ENCODE measurements at regions of chr2 and their contacts with region 1.

Region 1: DNA sequence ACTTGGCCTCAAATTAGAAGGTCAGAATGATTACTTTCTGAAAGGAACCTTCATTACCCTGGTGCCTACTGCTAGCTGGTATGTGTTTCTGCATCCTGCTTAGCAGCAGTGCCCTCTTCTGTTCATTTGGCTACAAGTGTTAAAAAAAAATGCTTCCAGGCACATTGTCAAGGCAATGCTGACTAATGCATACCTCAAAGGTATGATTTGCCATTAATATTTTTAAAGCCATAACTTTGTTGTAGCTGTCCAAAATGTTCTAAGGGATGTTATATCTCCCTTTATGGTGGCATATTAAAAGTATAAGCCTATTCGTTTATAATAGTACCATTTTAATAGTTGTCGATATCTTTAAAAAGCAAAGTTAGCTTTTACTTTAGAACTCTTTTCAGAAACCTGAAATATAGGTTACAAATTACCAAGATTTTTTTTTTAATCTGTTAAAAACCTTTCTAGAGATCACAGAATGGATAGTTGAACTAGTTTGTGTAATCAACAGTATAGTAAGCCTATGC is 52.0 kb upstream of the FAM171B start:
- DNase-seq: peak; percentile 21
- ATAC-seq: peak; percentile 91
- H3K4me3 ChIP-seq: no peak overlapping the region
- H3K27ac ChIP-seq: no peak overlapping the region
- H3K4me1 ChIP-seq: peaks cover 30% of the 10 kb centered on the region
- H3K27me3 ChIP-seq: no peaks in the 10 kb centered on the region
- CTCF ChIP-seq: peak; percentile 62 to 84 (median 76)
- EP300 ChIP-seq: no peak
- POLR2A ChIP-seq: no peak
- RAD21 ChIP-seq: peak; percentile 95

Region 2: GRCh38 chr2:186496401-186496800 is 145.5 kb before region 1 on chr2:
- CTCF ChIA-PET with region 1: interaction called, 244 read pairs
- POLR2A ChIA-PET with region 1: no interaction called
- RAD21 ChIA-PET with region 1: interaction called, 94 read pairs
- SMC1A ChIA-PET with region 1: interaction called, 14 read pairs
- in situ Hi-C with region 1: no loop called
- intact Hi-C with region 1: no loop called
- DNase-seq: no peak
- ATAC-seq: no peak
- H3K4me3 ChIP-seq: no peak overlapping the region
- H3K27ac ChIP-seq: no peak overlapping the region
- H3K4me1 ChIP-seq: no peaks in the 10 kb centered on the region
- H3K27me3 ChIP-seq: no peaks in the 10 kb centered on the region
- CTCF ChIP-seq: no peak
- EP300 ChIP-seq: no peak
- POLR2A ChIP-seq: no peak
- RAD21 ChIP-seq: no peak

Region 3: DNA sequence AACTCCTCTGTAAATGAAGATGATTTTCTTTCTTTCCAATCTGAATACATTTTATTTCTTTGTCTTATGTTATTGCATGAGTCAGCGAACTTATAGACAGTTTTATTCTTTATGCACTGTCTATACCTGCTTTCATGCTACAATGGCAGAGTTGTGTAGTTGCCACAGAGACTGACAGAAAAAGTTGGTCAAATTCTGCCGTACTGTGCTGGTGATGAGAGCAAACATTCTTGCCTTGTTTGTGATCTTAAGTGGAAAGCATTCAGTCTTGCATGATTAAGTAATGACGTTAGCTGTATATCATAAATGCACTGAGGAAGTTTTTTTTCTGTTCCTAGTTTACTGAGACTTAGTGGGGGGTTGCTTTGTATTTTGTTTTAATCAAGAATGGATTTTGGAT is 122.9 kb before region 1 on chr2:
- CTCF ChIA-PET with region 1: interaction called, 35 read pairs
- POLR2A ChIA-PET with region 1: no interaction called
- RAD21 ChIA-PET with region 1: interaction called, 6 read pairs
- SMC1A ChIA-PET with region 1: interaction called, 28 read pairs
- in situ Hi-C with region 1: no loop called
- intact Hi-C with region 1: no loop called
- DNase-seq: no peak
- ATAC-seq: no peak
- H3K4me3 ChIP-seq: no peak overlapping the region
- H3K27ac ChIP-seq: no peak overlapping the region
- H3K4me1 ChIP-seq: no peaks in the 10 kb centered on the region
- H3K27me3 ChIP-seq: no peaks in the 10 kb centered on the region
- CTCF ChIP-seq: no peak
- EP300 ChIP-seq: no peak
- POLR2A ChIP-seq: no peak
- RAD21 ChIP-seq: no peak

Region 4: DNA sequence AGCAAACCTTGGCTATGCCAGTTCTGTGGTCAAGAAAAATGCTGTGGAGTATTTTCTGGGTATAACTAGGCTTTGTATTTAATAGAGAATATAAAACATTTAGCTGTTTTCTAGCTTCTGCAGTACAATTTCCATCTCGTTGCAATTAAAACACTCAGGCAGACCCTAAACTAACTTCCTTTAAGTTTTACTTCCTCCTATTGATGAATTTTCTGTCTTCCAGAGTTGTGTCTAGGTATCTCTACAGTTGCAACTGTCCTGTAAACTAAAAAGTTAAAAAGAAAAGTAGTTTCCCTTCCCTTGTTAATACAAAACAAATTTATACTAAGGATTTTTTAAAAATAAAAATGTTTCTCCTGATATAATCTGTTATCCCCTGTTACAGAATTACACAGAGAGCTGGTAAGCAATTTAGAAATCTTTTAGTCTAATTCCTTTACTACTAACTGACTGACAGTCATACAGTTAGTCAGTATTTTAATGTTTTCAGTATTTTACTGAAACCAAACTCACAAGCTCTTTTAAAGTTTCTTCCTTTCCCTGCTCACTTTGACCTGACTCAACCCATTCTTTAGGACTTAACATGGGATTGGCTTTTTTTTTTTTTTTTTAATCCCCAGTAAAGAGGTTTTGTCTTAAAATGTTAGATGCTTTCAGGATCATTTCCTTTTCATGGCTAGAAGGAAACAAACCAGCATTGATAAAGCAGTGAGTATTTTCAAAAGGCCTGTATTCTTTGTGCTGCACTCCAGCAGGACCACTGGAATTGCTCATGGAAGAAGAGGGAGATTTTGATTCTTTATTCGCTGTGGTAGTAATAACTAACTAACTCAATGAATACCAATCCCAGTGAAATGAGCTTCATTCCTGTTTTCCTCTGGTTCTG is 29.1 kb before region 1 on chr2:
- CTCF ChIA-PET with region 1: interaction called, 10 read pairs
- POLR2A ChIA-PET with region 1: no interaction called
- RAD21 ChIA-PET with region 1: no interaction called
- SMC1A ChIA-PET with region 1: interaction called, 5 read pairs
- in situ Hi-C with region 1: no loop called
- intact Hi-C with region 1: no loop called
- DNase-seq: no peak
- ATAC-seq: peak; percentile 53
- H3K4me3 ChIP-seq: no peak overlapping the region
- H3K27ac ChIP-seq: no peak overlapping the region
- H3K4me1 ChIP-seq: no peaks in the 10 kb centered on the region; the same call in 1 of the 2 replicates
- H3K27me3 ChIP-seq: no peaks in the 10 kb centered on the region
- CTCF ChIP-seq: no peak
- EP300 ChIP-seq: no peak
- POLR2A ChIP-seq: no peak
- RAD21 ChIP-seq: no peak

Region 5: DNA sequence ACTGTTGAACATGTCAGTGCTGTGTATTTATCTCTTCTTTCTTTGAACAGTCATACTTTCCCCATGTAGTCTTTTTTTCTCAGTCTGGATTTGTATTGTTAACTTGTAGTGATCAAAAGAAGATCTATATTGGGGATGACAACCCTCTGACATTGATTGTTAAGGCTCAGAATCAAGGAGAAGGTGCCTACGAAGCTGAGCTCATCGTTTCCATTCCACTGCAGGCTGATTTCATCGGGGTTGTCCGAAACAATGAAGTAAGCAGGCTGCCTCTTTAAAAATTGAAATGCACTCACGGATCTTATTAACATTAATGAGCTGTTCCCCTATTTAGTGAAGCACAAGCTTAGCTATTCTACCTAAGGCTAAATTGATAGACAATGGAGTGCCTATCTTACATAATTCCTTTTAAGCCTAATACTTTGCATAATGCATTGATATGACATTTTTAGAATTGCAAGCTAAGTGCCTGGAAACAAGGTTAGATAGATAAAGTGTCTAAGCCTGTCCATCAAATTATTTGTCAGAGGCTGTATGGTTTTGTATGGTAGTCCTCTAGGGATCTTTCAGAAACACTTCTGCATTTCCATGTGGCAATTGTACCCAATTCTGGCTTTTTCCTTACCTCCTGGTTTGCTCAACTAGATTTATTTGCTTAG is 22.6 kb after region 1 on chr2:
- CTCF ChIA-PET with region 1: interaction called, 12 read pairs
- POLR2A ChIA-PET with region 1: no interaction called
- RAD21 ChIA-PET with region 1: no interaction called
- SMC1A ChIA-PET with region 1: interaction called, 4 read pairs
- in situ Hi-C with region 1: no loop called
- intact Hi-C with region 1: no loop called
- DNase-seq: no peak
- ATAC-seq: no peak
- H3K4me3 ChIP-seq: no peak overlapping the region
- H3K27ac ChIP-seq: no peak overlapping the region
- H3K4me1 ChIP-seq: no peaks in the 10 kb centered on the region
- H3K27me3 ChIP-seq: no peaks in the 10 kb centered on the region
- CTCF ChIP-seq: no peak
- EP300 ChIP-seq: no peak
- POLR2A ChIP-seq: no peak
- RAD21 ChIP-seq: no peak

Region 6: DNA sequence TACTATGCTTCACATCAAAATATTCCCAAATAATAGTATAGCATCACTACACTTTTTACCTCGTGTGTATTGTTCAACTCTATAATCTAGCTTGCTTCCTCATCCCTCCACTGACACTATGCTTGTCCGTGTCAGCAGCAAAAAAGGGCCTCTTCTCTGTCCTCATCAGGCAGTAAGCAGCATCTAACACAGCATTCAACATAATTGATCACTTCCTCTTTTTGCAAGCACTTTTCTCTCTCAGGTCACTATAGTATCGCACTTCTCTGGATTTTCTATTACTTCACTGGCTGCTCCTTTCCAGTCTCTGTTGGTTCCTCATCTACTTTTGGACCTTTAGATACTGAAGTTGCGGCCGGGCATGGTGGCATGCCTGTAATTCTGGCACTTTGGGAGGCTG is 272.0 kb after region 1 on chr2:
- CTCF ChIA-PET with region 1: no interaction called
- POLR2A ChIA-PET with region 1: no interaction called
- RAD21 ChIA-PET with region 1: no interaction called
- SMC1A ChIA-PET with region 1: no interaction called
- in situ Hi-C with region 1: no loop called
- intact Hi-C with region 1: no loop called
- DNase-seq: peak; percentile 3
- ATAC-seq: peak; percentile 99
- H3K4me3 ChIP-seq: no peak overlapping the region
- H3K27ac ChIP-seq: no peak overlapping the region
- H3K4me1 ChIP-seq: peaks cover 3% of the 10 kb centered on the region; the same call in 1 of the 2 replicates
- H3K27me3 ChIP-seq: no peaks in the 10 kb centered on the region; a peak in 1 of 4 replicates
- CTCF ChIP-seq: no peak
- EP300 ChIP-seq: peak in 1 of 2 experiments; percentile 69; a peak in 1 of 4 replicates
- POLR2A ChIP-seq: no peak
- RAD21 ChIP-seq: no peak